K562 (cell line): ENCODE measurements at regions of chr3 and their contacts with region 1.

Region 1: GRCh38 chr3:177345049-177345972 is 148.0 kb upstream of the TBL1XR1 start:
- DNase-seq: peak; percentile 87 to 96 (median 88)
- ATAC-seq: peak; percentile 90
- H3K4me3 ChIP-seq: no peak overlapping the region
- H3K27ac ChIP-seq: peak overlapping the region; percentile 96
- H3K4me1 ChIP-seq: peaks cover 7 to 53% of the 10 kb centered on the region in 2 experiments; a peak in 4 of 5 replicates
- H3K27me3 ChIP-seq: no peaks in the 10 kb centered on the region
- CTCF ChIP-seq: no peak
- EP300 ChIP-seq: peak; percentile 96
- POLR2A ChIP-seq: peak; percentile 78
- RAD21 ChIP-seq: peak; percentile 27 to 57; a peak in 3 of 4 replicates

Region 2: GRCh38 chr3:177026505-177027277 is 318.6 kb before region 1 on chr3:
- CTCF ChIA-PET with region 1: no interaction called
- POLR2A ChIA-PET with region 1: no interaction called
- in situ Hi-C with region 1: no loop called
- intact Hi-C with region 1: no loop called
- DNase-seq: peak in 2 of 4 experiments; percentile 40 to 50
- ATAC-seq: peak; percentile 86
- H3K4me3 ChIP-seq: no peak overlapping the region
- H3K27ac ChIP-seq: peak overlapping the region; percentile 42
- H3K4me1 ChIP-seq: peaks cover 7 to 19% of the 10 kb centered on the region in 2 experiments
- H3K27me3 ChIP-seq: no peaks in the 10 kb centered on the region
- CTCF ChIP-seq: no peak
- EP300 ChIP-seq: peak; percentile 65; the same call in 1 of the 2 replicates
- POLR2A ChIP-seq: no peak
- RAD21 ChIP-seq: no peak

Region 3: DNA sequence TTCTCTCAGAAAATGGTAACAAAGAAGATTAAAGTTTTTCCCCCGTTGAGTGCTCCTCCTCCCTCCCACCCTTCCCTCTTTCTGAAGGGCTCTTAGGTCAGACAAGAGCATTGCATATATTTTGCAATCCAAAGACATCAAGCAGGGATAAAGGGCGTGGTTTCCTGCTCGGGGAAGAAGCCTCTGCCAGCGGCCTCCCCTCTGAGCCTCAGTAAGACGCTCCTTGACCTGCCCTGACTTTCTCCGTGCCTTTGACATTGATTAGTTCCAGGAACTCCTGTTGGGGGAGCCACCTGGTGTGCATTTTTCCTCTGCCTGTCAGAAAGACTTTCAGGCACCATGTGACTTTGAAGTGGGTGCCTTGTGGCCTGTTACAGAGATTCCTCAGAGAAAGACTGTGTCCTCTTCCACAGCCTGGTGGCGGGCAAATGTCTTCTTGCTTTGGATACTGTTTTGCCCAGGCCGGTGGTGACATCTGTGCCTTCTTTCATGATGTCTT is 60.9 kb before region 1 on chr3:
- CTCF ChIA-PET with region 1: no interaction called
- POLR2A ChIA-PET with region 1: no interaction called
- in situ Hi-C with region 1: no loop called
- intact Hi-C with region 1: loop called (anchors 2 kb)
- DNase-seq: peak; percentile 64 to 91 (median 74)
- ATAC-seq: peak; percentile 90
- H3K4me3 ChIP-seq: no peak overlapping the region
- H3K27ac ChIP-seq: peak overlapping the region; percentile 69
- H3K4me1 ChIP-seq: peaks cover 0 to 36% of the 10 kb centered on the region in 2 experiments; a peak in 4 of 5 replicates
- H3K27me3 ChIP-seq: no peaks in the 10 kb centered on the region
- CTCF ChIP-seq: peak; percentile 31 to 52 (median 35)
- EP300 ChIP-seq: peak; percentile 80
- POLR2A ChIP-seq: no peak
- RAD21 ChIP-seq: peak; percentile 11 to 69; a peak in 2 of 4 replicates

Region 4: DNA sequence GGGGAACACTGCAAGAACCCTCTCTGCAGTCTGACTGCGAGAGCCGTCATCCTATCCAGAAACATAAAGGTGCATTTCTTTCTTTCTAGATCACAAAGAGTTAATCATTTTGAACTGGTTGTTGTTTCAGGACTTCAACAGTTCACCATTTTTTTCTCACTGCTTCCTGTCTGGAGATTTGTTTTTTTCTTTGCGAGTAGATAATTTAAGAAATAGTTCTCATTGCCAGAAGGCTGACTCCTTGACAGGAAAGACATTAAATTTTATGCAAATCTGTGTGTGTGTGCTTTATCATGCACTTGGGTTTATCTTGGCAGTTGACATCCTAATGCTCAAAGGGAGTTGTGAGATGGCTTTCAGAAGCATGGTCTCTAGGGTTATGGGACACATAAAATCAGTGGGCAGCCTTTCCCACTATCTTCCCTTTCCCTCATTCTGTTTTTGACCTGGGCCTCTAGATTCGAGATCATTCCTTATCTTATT is 24.5 kb before region 1 on chr3:
- CTCF ChIA-PET with region 1: no interaction called
- POLR2A ChIA-PET with region 1: no interaction called
- in situ Hi-C with region 1: no loop called
- intact Hi-C with region 1: no loop called
- DNase-seq: no peak
- ATAC-seq: peak; percentile 57
- H3K4me3 ChIP-seq: no peak overlapping the region
- H3K27ac ChIP-seq: no peak overlapping the region; the same call in 2 of the 3 replicates
- H3K4me1 ChIP-seq: peaks cover 0 to 5% of the 10 kb centered on the region in 2 experiments; a peak in 3 of 5 replicates
- H3K27me3 ChIP-seq: no peaks in the 10 kb centered on the region
- CTCF ChIP-seq: no peak
- EP300 ChIP-seq: no peak
- POLR2A ChIP-seq: no peak
- RAD21 ChIP-seq: no peak